Tibial artery (tissue), 4 donors: ENCODE measurements at regions of chr20 and their contacts with region 1.

Region 1: DNA sequence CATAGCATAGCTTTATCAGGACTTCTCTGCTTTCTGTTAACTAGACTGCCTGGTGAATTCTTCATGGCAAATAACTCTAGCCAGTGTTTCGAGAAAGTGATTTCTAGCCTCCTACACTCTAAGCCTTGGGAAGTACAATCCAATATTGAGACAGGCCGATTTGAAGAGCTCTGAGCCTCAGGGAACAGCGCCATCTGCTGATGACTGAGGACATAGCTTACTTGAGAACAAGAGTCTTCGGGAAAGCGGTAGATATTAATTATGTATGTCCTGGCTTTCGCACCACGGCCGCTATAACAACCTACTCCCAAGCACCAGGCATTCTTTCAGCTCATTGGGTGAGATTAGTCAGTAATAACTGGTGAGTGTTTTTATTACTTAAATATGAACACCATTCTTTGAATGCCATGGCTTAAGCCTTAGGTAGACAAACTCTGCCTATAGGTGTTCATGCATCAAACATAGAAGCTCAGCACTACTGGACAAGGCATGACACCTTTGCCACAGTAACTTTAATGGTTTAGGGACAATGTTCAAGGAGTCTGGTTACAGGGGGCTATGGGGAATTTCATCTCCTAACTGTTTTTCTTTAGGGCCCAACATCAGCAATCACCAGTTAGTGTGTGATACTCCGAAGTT is 518.6 kb downstream of the BMP2 start:
- DNase-seq: peak; percentile 75 to 80
- H3K4me3 ChIP-seq: no peak overlapping the region
- H3K27ac ChIP-seq: no peak overlapping the region
- H3K4me1 ChIP-seq: no peaks in the 10 kb centered on the region
- H3K27me3 ChIP-seq: peaks cover 0 to 3% of the 10 kb centered on the region in 2 donors
- CTCF ChIP-seq: peak; percentile 73 to 79

Region 2: DNA sequence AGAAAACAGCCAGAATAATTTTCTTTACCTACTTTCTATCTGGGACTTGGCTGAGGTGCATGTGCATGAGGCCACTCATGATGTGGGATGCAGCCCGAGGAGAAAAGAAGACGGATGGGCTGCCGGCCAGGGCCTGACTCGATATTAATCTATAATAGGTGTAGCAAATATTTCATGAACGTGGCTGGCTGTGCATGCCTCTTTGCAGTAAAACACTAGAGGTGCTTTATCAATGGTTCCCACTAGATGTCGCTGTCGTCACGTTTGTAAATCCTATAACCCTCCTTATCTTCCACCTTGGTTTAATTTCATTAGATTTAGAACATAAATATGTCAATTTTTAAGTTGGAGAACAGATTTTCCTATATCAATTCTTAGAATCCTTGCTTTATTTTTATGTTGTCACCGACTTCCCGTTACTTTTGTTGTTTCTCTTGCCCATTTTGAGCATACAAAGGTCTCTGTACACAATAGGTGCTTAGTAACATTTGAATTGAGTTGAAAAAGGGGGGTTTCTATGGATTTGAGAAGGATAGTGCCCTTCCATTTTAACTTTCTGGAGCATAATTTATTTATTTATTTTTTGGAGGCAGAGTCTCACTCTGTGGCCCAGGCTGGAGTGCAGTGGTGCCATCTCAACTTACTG is 1143.6 kb before region 1 on chr20:
- intact Hi-C with region 1: loop called (anchors 10 kb)
- DNase-seq: peak in 1 of 2 donors; percentile 34
- H3K4me3 ChIP-seq: no peak overlapping the region
- H3K27ac ChIP-seq: no peak overlapping the region
- H3K4me1 ChIP-seq: no peaks in the 10 kb centered on the region
- H3K27me3 ChIP-seq: peaks cover 0 to 19% of the 10 kb centered on the region in 2 donors
- CTCF ChIP-seq: peak; percentile 69 to 91

Region 3: DNA sequence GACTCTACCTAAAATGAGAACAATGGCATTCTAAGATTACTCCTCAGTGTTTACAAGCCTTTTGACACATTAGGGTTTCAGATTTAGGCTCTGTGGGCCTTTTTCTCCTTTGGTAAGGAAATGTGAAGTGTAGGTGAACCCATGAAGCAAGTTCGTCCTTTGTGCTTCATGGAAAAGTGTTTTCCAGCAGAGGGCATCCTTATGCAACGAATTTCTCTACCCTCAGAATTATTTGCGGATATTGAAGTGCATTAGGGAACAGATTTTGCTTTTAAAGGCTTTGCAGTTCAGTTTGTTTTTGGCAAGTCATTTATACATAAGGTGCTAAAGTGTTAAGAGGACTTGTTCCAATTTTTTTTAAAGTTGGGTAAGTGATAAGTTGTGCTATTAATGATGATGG is 1107.5 kb before region 1 on chr20:
- intact Hi-C with region 1: loop called (anchors 10 kb)
- DNase-seq: no peak
- H3K4me3 ChIP-seq: no peak overlapping the region
- H3K27ac ChIP-seq: no peak overlapping the region
- H3K4me1 ChIP-seq: no peaks in the 10 kb centered on the region
- H3K27me3 ChIP-seq: peaks cover 0 to 2% of the 10 kb centered on the region in 2 donors
- CTCF ChIP-seq: peak in 1 of 2 experiments; percentile 39

Region 4: GRCh38 chr20:6265204-6265904 is 1020.7 kb before region 1 on chr20:
- intact Hi-C with region 1: loop called (anchors 10 kb)
- DNase-seq: no peak
- H3K4me3 ChIP-seq: peak overlapping the region; percentile 12 to 21
- H3K27ac ChIP-seq: peak overlapping the region; percentile 46 to 64
- H3K4me1 ChIP-seq: peaks cover 0 to 22% (median 2%) of the 10 kb centered on the region in 4 donors
- H3K27me3 ChIP-seq: no peaks in the 10 kb centered on the region
- CTCF ChIP-seq: peak; percentile 38 to 44

Region 5: GRCh38 chr20:6767536-6768227 is 518.4 kb before region 1 on chr20 and contains the start of gene BMP2:
- intact Hi-C with region 1: loop called (anchors 10 kb)
- DNase-seq: peak; percentile 24 to 68
- H3K4me3 ChIP-seq: peak within 1 kb of the TSS; percentile 70 to 87
- H3K27ac ChIP-seq: peak within 1 kb of the TSS; percentile 69 to 74
- H3K4me1 ChIP-seq: peaks cover 0 to 36% (median 20%) of the 10 kb centered on the region in 4 donors
- H3K27me3 ChIP-seq: no peaks in the 10 kb centered on the region
- CTCF ChIP-seq: no peak

Region 6: DNA sequence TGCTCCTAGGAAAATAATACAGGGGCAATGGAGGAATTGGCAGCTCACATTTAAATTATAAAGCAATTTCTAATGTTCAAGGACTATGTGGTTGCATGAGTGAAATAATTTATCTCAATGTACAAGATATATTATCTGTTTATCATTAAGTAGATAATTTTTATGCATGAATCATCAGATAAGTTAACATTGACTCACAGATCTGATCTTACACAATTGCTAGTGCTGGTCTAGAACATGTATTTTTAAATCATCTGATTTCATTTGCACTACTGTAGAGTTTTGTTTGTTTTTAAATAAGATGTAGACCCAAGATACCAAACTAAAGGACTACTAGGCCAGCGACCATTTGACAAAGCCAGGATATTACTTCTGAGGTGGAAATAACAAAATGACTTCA is 319.3 kb before region 1 on chr20:
- intact Hi-C with region 1: no loop called
- DNase-seq: no peak
- H3K4me3 ChIP-seq: no peak overlapping the region
- H3K27ac ChIP-seq: no peak overlapping the region
- H3K4me1 ChIP-seq: no peaks in the 10 kb centered on the region
- H3K27me3 ChIP-seq: no peaks in the 10 kb centered on the region
- CTCF ChIP-seq: no peak